ENCODE measurements at regions of chr6 and their contacts with region 1.

Region 1: GRCh38 chr6:28496099-28496779 is 19.4 kb downstream of the GPX6 start:
- DNase-seq: no peak
- H3K4me3 Mint-ChIP-seq: no peak overlapping the region
- H3K27ac Mint-ChIP-seq: no peak overlapping the region
- H3K4me1 Mint-ChIP-seq: peaks cover 8% of the 10 kb centered on the region
- H3K27me3 Mint-ChIP-seq: peaks cover 18% of the 10 kb centered on the region

Region 2: DNA sequence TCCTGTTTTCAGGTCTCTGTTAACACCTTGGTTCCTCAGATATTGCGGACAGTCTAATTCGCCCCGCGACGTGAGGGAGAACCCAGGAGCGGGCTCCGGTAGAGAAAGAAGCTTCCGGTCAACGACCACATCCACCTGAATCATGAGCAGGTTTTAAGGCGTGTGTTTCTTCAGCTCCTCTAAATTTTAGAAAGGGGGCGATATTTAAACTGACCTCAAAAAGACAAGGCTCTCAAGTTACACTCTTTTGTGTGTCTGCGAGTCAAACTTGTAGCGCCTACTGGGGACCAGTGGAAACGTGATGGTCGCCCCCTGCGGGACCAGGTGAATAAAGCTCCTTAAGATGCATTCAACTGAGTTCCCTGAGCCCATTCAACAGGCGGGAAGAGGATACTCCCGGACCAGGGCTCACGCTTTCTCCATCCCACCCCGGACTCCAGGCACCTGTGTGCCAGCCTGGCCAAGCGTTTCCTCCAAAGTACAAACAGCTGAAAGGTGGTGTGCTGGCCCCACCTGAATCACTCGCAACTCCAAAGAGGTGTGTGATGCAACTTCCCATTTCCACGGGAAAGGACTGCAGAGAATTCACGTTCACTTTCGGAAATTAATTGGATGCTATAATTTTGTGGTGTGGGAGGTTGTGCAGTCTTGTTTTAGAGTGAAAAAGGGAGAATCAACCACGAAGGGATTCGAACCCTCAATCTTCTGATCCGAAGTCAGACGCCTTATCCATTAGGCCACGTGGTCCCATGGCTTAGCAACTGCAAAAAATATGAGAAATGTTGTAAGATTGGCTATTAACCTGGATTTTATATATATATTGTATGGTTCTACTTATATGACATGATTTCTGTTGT is 46.4 kb after region 1 on chr6:
- CTCF ChIA-PET with region 1: interaction called, 3 read pairs
- intact Hi-C with region 1: loop called (anchors 1 kb)
- DNase-seq: peak; percentile 80
- H3K4me3 Mint-ChIP-seq: peak overlapping the region; percentile 91
- H3K27ac Mint-ChIP-seq: peak overlapping the region; percentile 80
- H3K4me1 Mint-ChIP-seq: peaks cover 27% of the 10 kb centered on the region
- H3K27me3 Mint-ChIP-seq: peaks cover 30% of the 10 kb centered on the region

Region 3: DNA sequence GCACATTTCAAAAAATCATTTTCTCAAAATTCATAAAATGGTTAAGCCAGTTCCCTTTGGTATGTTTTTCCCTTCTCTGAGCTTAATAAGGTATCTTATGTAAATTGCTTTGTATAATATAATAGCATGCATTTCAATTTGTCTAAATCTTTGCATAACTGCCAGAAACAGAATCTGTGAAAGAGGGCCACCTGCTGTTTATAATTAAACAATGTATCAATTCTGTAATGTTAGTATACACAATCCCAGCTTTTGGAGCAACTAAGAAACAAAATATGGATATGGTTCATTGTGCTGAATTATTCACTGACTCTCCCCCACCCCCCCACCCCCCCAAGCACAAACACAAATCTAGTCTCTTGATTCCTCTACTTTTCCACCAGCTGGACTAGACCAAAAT is 84.2 kb after region 1 on chr6:
- CTCF ChIA-PET with region 1: interaction called, 4 read pairs
- intact Hi-C with region 1: loop called (anchors 1 kb)
- DNase-seq: no peak
- H3K4me3 Mint-ChIP-seq: no peak overlapping the region
- H3K27ac Mint-ChIP-seq: no peak overlapping the region
- H3K4me1 Mint-ChIP-seq: no peaks in the 10 kb centered on the region
- H3K27me3 Mint-ChIP-seq: peaks cover 21% of the 10 kb centered on the region

Region 4: DNA sequence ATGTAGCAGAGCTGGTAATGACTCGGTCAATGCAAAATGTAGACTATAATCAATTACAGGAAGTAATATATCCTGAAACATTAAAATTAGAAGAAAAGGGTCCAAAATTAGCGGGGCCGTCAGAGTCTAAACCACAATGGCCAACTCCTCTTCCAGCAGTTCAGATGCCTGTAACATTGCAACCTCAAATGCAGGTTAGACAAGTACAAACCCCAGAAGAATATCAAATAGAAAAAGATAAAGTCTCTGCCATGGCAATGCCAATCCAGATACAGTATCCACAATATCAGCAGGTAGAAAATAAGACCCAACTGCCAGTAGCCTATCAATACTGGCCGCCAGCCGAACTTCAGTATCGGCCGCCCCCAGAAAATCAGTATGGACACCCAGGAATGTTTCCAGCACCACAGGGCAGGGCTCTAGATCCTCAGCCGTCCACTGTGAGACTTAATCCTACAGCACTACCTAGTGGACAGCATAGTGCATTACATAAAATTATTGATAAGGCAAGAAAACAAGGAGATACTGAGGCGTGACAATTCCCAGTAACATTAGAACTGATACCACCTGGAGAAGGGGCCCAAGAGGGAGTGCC is 187.8 kb after region 1 on chr6:
- CTCF ChIA-PET with region 1: interaction called, 3 read pairs
- intact Hi-C with region 1: loop called (anchors 1 kb)
- DNase-seq: no peak
- H3K4me3 Mint-ChIP-seq: no peak overlapping the region
- H3K27ac Mint-ChIP-seq: no peak overlapping the region
- H3K4me1 Mint-ChIP-seq: peaks cover 5% of the 10 kb centered on the region
- H3K27me3 Mint-ChIP-seq: peaks cover 73% of the 10 kb centered on the region

Measured in activated naive CD4-positive, alpha-beta T cell treated with anti-CD3 and anti-CD28 coated beads for 36 hours (primary cell).